A673 (cell line): ENCODE measurements at regions of chr12 and their contacts with region 1.

Region 1: GRCh38 chr12:81627336-81628189 is 131.6 kb downstream of the PPFIA2 start:
- DNase-seq: peak; percentile 79
- H3K4me3 ChIP-seq: no peak overlapping the region
- H3K27ac ChIP-seq: no peak overlapping the region
- H3K4me1 ChIP-seq: peaks cover under 1% of the 10 kb centered on the region
- H3K27me3 ChIP-seq: no peaks in the 10 kb centered on the region
- CTCF ChIP-seq: peak; percentile 78

Region 2: DNA sequence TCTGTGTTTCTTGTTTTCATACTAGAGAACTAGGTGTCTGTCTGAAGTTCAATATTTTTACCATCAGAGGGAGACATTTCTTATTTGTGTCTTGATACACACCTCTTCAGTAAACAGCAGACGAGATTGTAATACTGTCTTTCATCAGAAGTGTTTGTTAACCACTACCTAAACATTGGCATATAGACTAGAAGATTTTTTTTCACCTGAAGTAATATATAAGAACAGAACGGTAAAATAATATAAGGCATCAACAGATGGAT is 359.0 kb before region 1 on chr12:
- CTCF ChIA-PET with region 1: no interaction called
- POLR2A ChIA-PET with region 1: no interaction called
- intact Hi-C with region 1: loop called (anchors 5 kb)
- DNase-seq: peak; percentile 70
- H3K4me3 ChIP-seq: no peak overlapping the region
- H3K27ac ChIP-seq: no peak overlapping the region
- H3K4me1 ChIP-seq: no peaks in the 10 kb centered on the region
- H3K27me3 ChIP-seq: no peaks in the 10 kb centered on the region
- CTCF ChIP-seq: peak; percentile 66

Region 3: GRCh38 chr12:81330480-81330879 is 297.1 kb before region 1 on chr12:
- CTCF ChIA-PET with region 1: no interaction called
- POLR2A ChIA-PET with region 1: no interaction called
- intact Hi-C with region 1: loop called (anchors 5 kb)
- DNase-seq: peak; percentile 39
- H3K4me3 ChIP-seq: no peak overlapping the region
- H3K27ac ChIP-seq: no peak overlapping the region
- H3K4me1 ChIP-seq: peaks cover 3% of the 10 kb centered on the region
- H3K27me3 ChIP-seq: no peaks in the 10 kb centered on the region
- CTCF ChIP-seq: peak; percentile 50; the same call in 1 of the 2 replicates

Region 4: GRCh38 chr12:81450920-81451739 is 176.4 kb before region 1 on chr12:
- CTCF ChIA-PET with region 1: interaction called, 4 read pairs
- POLR2A ChIA-PET with region 1: no interaction called
- intact Hi-C with region 1: loop called (anchors 1 kb)
- DNase-seq: peak; percentile 88
- H3K4me3 ChIP-seq: no peak overlapping the region
- H3K27ac ChIP-seq: no peak overlapping the region
- H3K4me1 ChIP-seq: peaks cover 10% of the 10 kb centered on the region
- H3K27me3 ChIP-seq: no peaks in the 10 kb centered on the region
- CTCF ChIP-seq: peak; percentile 77

Region 5: DNA sequence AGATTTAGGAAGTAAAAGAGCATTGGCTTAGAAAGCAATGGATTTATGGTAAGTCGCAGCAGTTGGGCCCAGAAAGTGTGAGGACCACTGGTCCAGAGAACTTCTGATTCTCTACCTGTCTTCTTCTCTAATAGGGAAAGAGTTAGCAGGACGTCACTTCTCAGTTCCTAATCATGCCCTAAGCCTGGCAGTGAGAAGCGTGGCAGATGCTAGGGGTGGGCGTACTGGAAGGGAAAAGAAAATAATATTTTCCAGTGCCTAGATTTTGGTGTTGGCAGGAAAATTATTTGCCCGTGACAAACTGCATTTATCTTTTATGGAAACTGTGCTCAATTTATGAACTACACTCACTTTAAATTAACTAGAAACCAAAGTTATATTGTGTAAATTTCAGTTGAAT is 80.8 kb before region 1 on chr12:
- CTCF ChIA-PET with region 1: no interaction called
- POLR2A ChIA-PET with region 1: no interaction called
- intact Hi-C with region 1: no loop called
- DNase-seq: no peak
- H3K4me3 ChIP-seq: no peak overlapping the region
- H3K27ac ChIP-seq: no peak overlapping the region
- H3K4me1 ChIP-seq: no peaks in the 10 kb centered on the region
- H3K27me3 ChIP-seq: no peaks in the 10 kb centered on the region
- CTCF ChIP-seq: no peak

Region 6: DNA sequence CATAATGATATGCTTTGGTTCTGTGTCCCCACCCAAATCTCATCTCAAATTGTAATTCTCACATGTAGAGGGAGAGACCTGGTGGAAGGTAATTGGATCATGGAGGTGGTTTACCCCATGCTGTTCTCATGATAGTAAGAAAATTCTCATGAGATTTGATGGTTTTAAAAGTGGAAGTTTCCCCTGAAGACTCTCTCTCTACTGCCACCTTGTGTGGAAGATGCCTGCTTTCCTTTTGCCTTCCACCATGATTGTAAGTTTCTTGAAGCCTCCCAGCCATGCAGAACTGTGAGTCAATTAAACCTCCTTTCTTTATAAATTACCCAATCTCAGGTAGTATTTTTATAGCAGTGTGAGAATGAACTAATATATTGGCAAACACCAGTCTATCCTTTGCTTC is 392.0 kb after region 1 on chr12:
- CTCF ChIA-PET with region 1: no interaction called
- POLR2A ChIA-PET with region 1: no interaction called
- intact Hi-C with region 1: no loop called
- DNase-seq: peak; percentile 9
- H3K4me3 ChIP-seq: no peak overlapping the region
- H3K27ac ChIP-seq: no peak overlapping the region
- H3K4me1 ChIP-seq: no peaks in the 10 kb centered on the region
- H3K27me3 ChIP-seq: no peaks in the 10 kb centered on the region
- CTCF ChIP-seq: peak; percentile 44